Naive thymus-derived CD4-positive, alpha-beta T cell (primary cell): ENCODE measurements at regions of chr5 and their contacts with region 1.

Region 1: GRCh38 chr5:96934708-96935558 is 947 bp upstream of the LNPEP start:
- DNase-seq: peak; percentile 92 to 98 (median 97)
- ATAC-seq: peak; percentile 81
- H3K4me3 ChIP-seq: peak overlapping the region; percentile 93
- H3K4me3 Mint-ChIP-seq: peak overlapping the region; percentile 84 to 100 (median 94)
- H3K27ac ChIP-seq: peak overlapping the region; percentile 86
- H3K27ac Mint-ChIP-seq: peak overlapping the region; percentile 95 to 99 (median 97)
- H3K4me1 ChIP-seq: peaks cover 34 to 46% of the 10 kb centered on the region in 2 donors
- H3K4me1 Mint-ChIP-seq: peaks cover 53 to 70% (median 64%) of the 10 kb centered on the region in 7 donors
- H3K27me3 ChIP-seq: no peaks in the 10 kb centered on the region
- H3K27me3 Mint-ChIP-seq: no peaks in the 10 kb centered on the region

Region 2: DNA sequence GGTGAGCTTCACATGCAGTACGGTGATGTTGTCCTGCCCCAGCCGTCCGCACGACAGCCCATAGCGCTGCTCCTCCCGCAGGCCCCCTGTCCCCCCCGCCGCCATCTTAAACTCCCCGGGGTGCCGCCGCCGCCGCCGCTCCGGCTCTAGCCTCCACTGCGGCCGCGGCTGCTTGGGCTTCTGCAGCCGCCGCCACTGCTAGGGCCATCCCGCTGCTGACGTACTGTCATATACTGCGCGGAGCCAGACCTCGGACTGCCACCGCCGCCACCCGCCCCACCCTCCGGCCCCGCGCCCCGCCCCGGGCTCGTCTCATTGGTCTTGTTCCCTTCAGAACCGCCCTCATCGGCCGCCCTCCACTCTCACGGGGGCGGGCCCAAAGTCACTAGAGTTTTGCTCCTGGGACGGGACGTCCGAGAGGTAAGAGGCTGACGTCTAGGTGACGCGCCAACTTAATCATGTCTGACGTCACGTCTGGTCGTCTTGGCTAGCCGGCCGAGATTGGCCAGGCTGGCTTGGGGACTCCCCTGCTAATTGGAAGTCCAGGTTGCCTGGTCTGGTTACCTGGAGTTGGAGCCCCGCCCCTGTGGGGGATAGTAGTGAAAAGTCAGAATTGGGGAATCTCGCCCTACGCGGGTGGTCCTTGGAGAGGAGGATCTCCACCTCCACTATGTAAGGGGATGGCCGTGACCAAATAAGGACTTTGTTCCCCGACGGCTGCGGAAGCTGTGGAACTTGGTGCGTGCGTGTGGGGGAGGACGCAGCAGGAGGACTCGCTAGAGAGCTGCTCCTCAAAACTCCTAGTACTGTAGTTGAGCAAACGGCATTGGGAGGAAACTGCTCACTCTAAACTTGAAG is 973.1 kb before region 1 on chr5 and contains the start of gene ELL2:
- CTCF ChIA-PET with region 1: no interaction called
- POLR2A ChIA-PET with region 1: no interaction called
- intact Hi-C with region 1: loop called (anchors 1 to 2 kb)
- DNase-seq: peak; percentile 85 to 98 (median 90)
- ATAC-seq: peak; percentile 93
- H3K4me3 ChIP-seq: peak within 1 kb of the TSS; percentile 73
- H3K4me3 Mint-ChIP-seq: peak within 1 kb of the TSS; percentile 94 to 99 (median 96)
- H3K27ac ChIP-seq: peak within 1 kb of the TSS; percentile 90
- H3K27ac Mint-ChIP-seq: peak within 1 kb of the TSS; percentile 87 to 99 (median 98)
- H3K4me1 ChIP-seq: peaks cover 12 to 13% of the 10 kb centered on the region in 2 donors
- H3K4me1 Mint-ChIP-seq: peaks cover 30 to 43% (median 34%) of the 10 kb centered on the region in 7 donors
- H3K27me3 ChIP-seq: no peaks in the 10 kb centered on the region
- H3K27me3 Mint-ChIP-seq: peaks cover 0 to 3% (median 0%) of the 10 kb centered on the region in 5 donors
- total RNA-seq, gene ELL2: 12.6 to 65.8 (median 41.3) TPM

Region 3: GRCh38 chr5:96807075-96807654 is 127.8 kb before region 1 on chr5:
- CTCF ChIA-PET with region 1: interaction called, 3 read pairs
- POLR2A ChIA-PET with region 1: interaction called, 14 read pairs
- intact Hi-C with region 1: loop called (anchors 1 kb)
- DNase-seq: peak in 1 of 9 donors; percentile 67
- ATAC-seq: peak; percentile 17
- H3K4me3 ChIP-seq: peak overlapping the region; percentile 85
- H3K4me3 Mint-ChIP-seq: peak overlapping the region; percentile 90 to 100 (median 96)
- H3K27ac ChIP-seq: peak overlapping the region; percentile 99
- H3K27ac Mint-ChIP-seq: peak overlapping the region; percentile 98 to 100 (median 99)
- H3K4me1 ChIP-seq: peaks cover 40 to 69% of the 10 kb centered on the region in 2 donors
- H3K4me1 Mint-ChIP-seq: peaks cover 57 to 92% (median 89%) of the 10 kb centered on the region in 7 donors
- H3K27me3 ChIP-seq: no peaks in the 10 kb centered on the region
- H3K27me3 Mint-ChIP-seq: peaks cover 0 to 2% (median 0%) of the 10 kb centered on the region in 5 donors

Region 4: GRCh38 chr5:96896806-96897205 is 38.1 kb before region 1 on chr5:
- CTCF ChIA-PET with region 1: no interaction called
- POLR2A ChIA-PET with region 1: interaction called, 18 read pairs
- intact Hi-C with region 1: loop called (anchors 1 kb)
- DNase-seq: no peak
- ATAC-seq: peak; percentile 73
- H3K4me3 ChIP-seq: peak overlapping the region; percentile 36
- H3K4me3 Mint-ChIP-seq: peak overlapping the region; percentile 67 to 88 (median 79)
- H3K27ac ChIP-seq: peak overlapping the region; percentile 69
- H3K27ac Mint-ChIP-seq: peak overlapping the region; percentile 83 to 98 (median 94)
- H3K4me1 ChIP-seq: peaks cover 6 to 17% of the 10 kb centered on the region in 2 donors
- H3K4me1 Mint-ChIP-seq: peaks cover 26 to 71% (median 68%) of the 10 kb centered on the region in 7 donors
- H3K27me3 ChIP-seq: no peaks in the 10 kb centered on the region
- H3K27me3 Mint-ChIP-seq: no peaks in the 10 kb centered on the region

Region 5: DNA sequence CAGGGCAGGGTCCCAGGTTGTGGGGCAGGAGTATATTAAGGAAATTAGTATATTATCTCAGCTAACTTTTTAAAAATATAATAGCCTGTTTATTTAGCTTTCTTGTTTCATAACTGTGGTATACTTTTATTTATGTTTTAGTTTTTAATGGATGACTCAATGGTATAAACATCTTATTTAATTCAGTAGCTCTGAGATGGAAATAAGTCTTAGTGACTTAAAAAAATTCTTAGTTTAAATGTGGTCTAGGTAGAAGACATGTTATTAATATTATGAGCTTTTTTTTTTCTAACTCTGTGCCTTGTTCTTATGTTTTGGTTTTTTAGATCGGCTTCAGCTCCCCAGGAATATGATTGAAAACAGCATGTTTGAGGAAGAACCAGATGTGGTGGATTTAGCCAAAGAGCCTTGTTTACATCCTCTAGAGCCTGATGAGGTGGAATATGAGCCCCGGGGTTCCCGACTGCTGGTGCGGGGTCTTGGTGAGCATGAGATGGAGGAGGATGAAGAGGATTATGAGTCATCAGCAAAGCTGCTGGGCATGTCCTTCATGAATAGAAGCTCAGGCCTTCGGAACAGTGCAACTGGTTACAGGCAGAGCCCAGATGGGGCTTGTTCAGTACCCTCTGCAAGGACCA is 44.0 kb after region 1 on chr5:
- CTCF ChIA-PET with region 1: interaction called, 3 read pairs
- POLR2A ChIA-PET with region 1: interaction called, 6 read pairs
- intact Hi-C with region 1: loop called in 1 of 2 experiments (anchors 2 kb)
- DNase-seq: no peak
- ATAC-seq: no peak
- H3K4me3 ChIP-seq: no peak overlapping the region
- H3K4me3 Mint-ChIP-seq: no peak overlapping the region
- H3K27ac ChIP-seq: no peak overlapping the region
- H3K27ac Mint-ChIP-seq: peak overlapping the region in 3 of 9 donors; percentile 5 to 55 (median 24)
- H3K4me1 ChIP-seq: peaks cover 12 to 15% of the 10 kb centered on the region in 2 donors
- H3K4me1 Mint-ChIP-seq: peaks cover 39 to 93% (median 78%) of the 10 kb centered on the region in 7 donors
- H3K27me3 ChIP-seq: no peaks in the 10 kb centered on the region
- H3K27me3 Mint-ChIP-seq: no peaks in the 10 kb centered on the region

Region 6: GRCh38 chr5:97142521-97143254 is 207.8 kb after region 1 on chr5 and contains the start of gene LIX1:
- CTCF ChIA-PET with region 1: interaction called, 3 read pairs
- POLR2A ChIA-PET with region 1: no interaction called
- intact Hi-C with region 1: loop called in 1 of 2 experiments (anchors 5 kb)
- DNase-seq: peak in 6 of 9 donors; percentile 5 to 46 (median 35)
- ATAC-seq: peak; percentile 77
- H3K4me3 ChIP-seq: no peak within 1 kb of the TSS
- H3K4me3 Mint-ChIP-seq: no peak within 1 kb of the TSS
- H3K27ac ChIP-seq: no peak within 1 kb of the TSS
- H3K27ac Mint-ChIP-seq: no peak within 1 kb of the TSS
- H3K4me1 ChIP-seq: no peaks in the 10 kb centered on the region
- H3K4me1 Mint-ChIP-seq: peaks cover 0 to 6% (median 0%) of the 10 kb centered on the region in 7 donors
- H3K27me3 ChIP-seq: no peaks in the 10 kb centered on the region
- H3K27me3 Mint-ChIP-seq: peaks cover 6 to 37% (median 13%) of the 10 kb centered on the region in 5 donors
- total RNA-seq, gene LIX1: not detected